Naive thymus-derived CD4-positive, alpha-beta T cell (primary cell): ENCODE measurements at regions of chr15 and their contacts with region 1.

Region 1: GRCh38 chr15:40694688-40695468 is at the start of gene RAD51:
- DNase-seq: peak; percentile 81 to 93 (median 92)
- ATAC-seq: peak; percentile 97
- H3K4me3 ChIP-seq: peak within 1 kb of the TSS; percentile 97
- H3K4me3 Mint-ChIP-seq: peak within 1 kb of the TSS; percentile 93 to 100 (median 95)
- H3K27ac ChIP-seq: peak within 1 kb of the TSS; percentile 91
- H3K27ac Mint-ChIP-seq: peak within 1 kb of the TSS; percentile 95 to 100 (median 99)
- H3K4me1 ChIP-seq: peaks cover 10% of the 10 kb centered on the region in 2 donors
- H3K4me1 Mint-ChIP-seq: peaks cover 14 to 42% (median 22%) of the 10 kb centered on the region in 7 donors
- H3K27me3 ChIP-seq: no peaks in the 10 kb centered on the region
- H3K27me3 Mint-ChIP-seq: no peaks in the 10 kb centered on the region
- total RNA-seq, gene RAD51: 0.51 to 51.5 (median 1.4) TPM

Region 2: DNA sequence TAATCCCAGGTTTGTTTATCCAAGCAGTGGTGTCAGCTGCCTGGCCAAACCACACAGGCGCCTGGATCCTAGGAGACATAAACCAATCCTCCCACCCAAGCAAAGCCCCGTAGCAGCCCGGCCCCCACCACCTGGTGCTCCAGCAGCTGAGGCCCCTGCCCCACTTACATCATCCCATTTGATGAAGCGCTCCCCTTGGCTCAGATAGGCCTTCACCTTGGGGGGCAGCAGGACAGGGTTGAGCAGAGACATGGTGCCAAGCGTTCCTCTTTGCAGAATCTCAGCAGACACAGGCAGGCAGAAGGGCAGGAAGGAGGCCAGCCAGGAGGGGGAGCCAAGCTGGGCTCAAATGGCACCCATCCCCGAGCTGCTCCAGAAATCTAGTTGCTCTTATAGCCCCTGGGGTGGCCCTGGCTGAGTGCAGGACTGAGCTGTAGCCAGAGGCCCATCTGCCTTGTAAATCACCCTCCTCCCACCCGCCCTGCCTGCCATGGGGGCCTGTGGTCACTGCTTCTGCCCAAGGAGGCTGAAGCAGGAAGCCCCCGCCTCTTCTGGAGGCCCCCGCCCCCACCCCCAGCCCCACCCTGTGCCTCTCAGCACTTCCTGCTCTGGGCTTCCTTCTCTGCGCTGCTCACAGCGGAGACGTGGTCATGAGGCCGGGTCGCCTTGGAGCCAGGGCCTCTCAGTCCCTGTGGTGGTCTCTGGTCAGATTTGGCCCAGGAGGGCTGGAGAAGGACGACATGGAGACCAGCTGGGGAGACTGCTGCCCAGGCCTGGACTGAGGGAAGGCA is 387.3 kb before region 1 on chr15 and contains the start of gene PLCB2:
- CTCF ChIA-PET with region 1: no interaction called
- POLR2A ChIA-PET with region 1: no interaction called
- intact Hi-C with region 1: no loop called
- DNase-seq: peak; percentile 57 to 83 (median 79)
- ATAC-seq: peak; percentile 83
- H3K4me3 ChIP-seq: peak within 1 kb of the TSS; percentile 99
- H3K4me3 Mint-ChIP-seq: peak within 1 kb of the TSS; percentile 93 to 99 (median 96)
- H3K27ac ChIP-seq: peak within 1 kb of the TSS; percentile 94
- H3K27ac Mint-ChIP-seq: peak within 1 kb of the TSS; percentile 93 to 99 (median 97)
- H3K4me1 ChIP-seq: peaks cover 16 to 22% of the 10 kb centered on the region in 2 donors
- H3K4me1 Mint-ChIP-seq: peaks cover 31 to 62% (median 48%) of the 10 kb centered on the region in 7 donors
- H3K27me3 ChIP-seq: no peaks in the 10 kb centered on the region
- H3K27me3 Mint-ChIP-seq: peaks cover 0 to 13% (median 0%) of the 10 kb centered on the region in 5 donors
- total RNA-seq, gene PLCB2: 179 to 359 (median 186) TPM

Region 3: GRCh38 chr15:40593588-40594428 is 101.1 kb before region 1 on chr15 and contains the start of gene KNL1:
- CTCF ChIA-PET with region 1: no interaction called
- POLR2A ChIA-PET with region 1: interaction called, 3 read pairs
- intact Hi-C with region 1: loop called (anchors 1 kb)
- DNase-seq: peak; percentile 83 to 94 (median 91)
- ATAC-seq: peak; percentile 85
- H3K4me3 ChIP-seq: peak within 1 kb of the TSS; percentile 98
- H3K4me3 Mint-ChIP-seq: peak within 1 kb of the TSS; percentile 91 to 99 (median 96)
- H3K27ac ChIP-seq: peak within 1 kb of the TSS; percentile 83
- H3K27ac Mint-ChIP-seq: peak within 1 kb of the TSS; percentile 91 to 100 (median 98)
- H3K4me1 ChIP-seq: peaks cover 11 to 12% of the 10 kb centered on the region in 2 donors
- H3K4me1 Mint-ChIP-seq: peaks cover 13 to 41% (median 25%) of the 10 kb centered on the region in 7 donors
- H3K27me3 ChIP-seq: no peaks in the 10 kb centered on the region
- H3K27me3 Mint-ChIP-seq: peaks cover 0 to 12% (median 6%) of the 10 kb centered on the region in 5 donors
- total RNA-seq, gene KNL1: 0.16 to 41.5 (median 1.7) TPM

Region 4: GRCh38 chr15:40754883-40755811 is 60.3 kb after region 1 on chr15 and contains the start of gene RMDN3:
- CTCF ChIA-PET with region 1: interaction called, 3 read pairs
- POLR2A ChIA-PET with region 1: interaction called, 8 read pairs
- intact Hi-C with region 1: loop called (anchors 1 kb)
- DNase-seq: peak; percentile 89 to 97 (median 92)
- ATAC-seq: peak; percentile 99
- H3K4me3 ChIP-seq: peak within 1 kb of the TSS; percentile 94
- H3K4me3 Mint-ChIP-seq: peak within 1 kb of the TSS; percentile 90 to 98 (median 94)
- H3K27ac ChIP-seq: peak within 1 kb of the TSS; percentile 95
- H3K27ac Mint-ChIP-seq: peak within 1 kb of the TSS; percentile 89 to 99 (median 95)
- H3K4me1 ChIP-seq: peaks cover 7 to 10% of the 10 kb centered on the region in 2 donors
- H3K4me1 Mint-ChIP-seq: peaks cover 16 to 37% (median 27%) of the 10 kb centered on the region in 7 donors
- H3K27me3 ChIP-seq: no peaks in the 10 kb centered on the region
- H3K27me3 Mint-ChIP-seq: no peaks in the 10 kb centered on the region
- total RNA-seq, gene RMDN3: 19.5 to 44.0 (median 31.9) TPM

Region 5: DNA sequence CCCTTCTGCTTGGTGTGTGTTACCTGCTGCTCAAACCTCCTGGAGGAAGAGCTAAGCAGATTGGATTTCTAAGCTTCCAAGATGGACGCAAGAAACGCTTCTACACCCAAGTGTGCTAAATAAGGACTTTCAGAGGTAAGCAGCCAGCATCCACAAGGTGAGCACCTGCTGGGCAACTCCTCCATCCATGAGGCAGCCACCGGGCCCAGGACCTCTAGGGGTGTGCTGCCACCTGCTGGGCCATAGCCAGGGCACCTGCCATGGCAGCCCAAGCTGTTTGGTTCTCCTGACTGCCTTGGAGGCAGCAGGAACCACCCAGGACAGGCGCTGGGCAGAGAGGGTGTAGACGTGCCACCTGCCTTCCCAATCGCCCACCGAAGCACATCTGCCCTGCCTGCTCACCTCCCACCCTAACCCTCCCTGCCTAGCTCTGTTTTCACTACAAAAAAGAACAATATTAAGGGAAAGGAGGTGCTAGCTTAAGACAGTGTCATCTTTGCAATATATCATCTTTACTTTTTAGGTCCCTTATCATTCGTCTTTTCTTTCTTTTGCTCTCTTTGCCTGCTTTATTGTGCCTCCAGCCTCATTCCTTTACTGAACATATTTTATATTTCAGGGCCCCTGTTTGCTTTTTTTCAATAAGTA is 87.8 kb after region 1 on chr15:
- CTCF ChIA-PET with region 1: no interaction called
- POLR2A ChIA-PET with region 1: interaction called, 11 read pairs
- intact Hi-C with region 1: no loop called
- DNase-seq: peak; percentile 63 to 78 (median 75)
- ATAC-seq: peak; percentile 99
- H3K4me3 ChIP-seq: no peak overlapping the region
- H3K4me3 Mint-ChIP-seq: no peak overlapping the region
- H3K27ac ChIP-seq: no peak overlapping the region
- H3K27ac Mint-ChIP-seq: peak overlapping the region in 2 of 9 donors; percentile 34 to 39
- H3K4me1 ChIP-seq: peaks cover 8 to 13% of the 10 kb centered on the region in 2 donors
- H3K4me1 Mint-ChIP-seq: peaks cover 12 to 25% (median 20%) of the 10 kb centered on the region in 7 donors
- H3K27me3 ChIP-seq: no peaks in the 10 kb centered on the region
- H3K27me3 Mint-ChIP-seq: no peaks in the 10 kb centered on the region

Region 6: DNA sequence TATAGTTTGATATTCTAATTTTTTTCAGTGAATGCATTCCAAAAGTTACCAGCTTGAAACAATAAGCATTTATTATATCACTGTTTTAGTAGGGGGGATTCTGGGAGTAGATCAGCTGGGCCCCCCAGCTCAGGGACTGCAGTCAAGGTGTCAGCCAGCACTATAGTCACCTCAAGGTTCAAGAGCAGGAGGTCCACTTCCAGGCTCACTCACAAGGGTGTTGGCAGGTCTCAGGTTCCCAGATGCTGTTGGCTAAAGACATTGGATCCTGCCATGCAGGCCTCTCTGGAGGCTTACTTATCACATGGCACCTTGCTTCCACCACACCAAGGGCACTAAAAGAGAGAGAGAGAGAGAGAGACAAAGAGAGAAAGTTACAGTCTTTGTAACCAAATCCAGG is 141.1 kb after region 1 on chr15:
- CTCF ChIA-PET with region 1: no interaction called
- POLR2A ChIA-PET with region 1: no interaction called
- intact Hi-C with region 1: no loop called
- DNase-seq: no peak
- ATAC-seq: no peak
- H3K4me3 ChIP-seq: no peak overlapping the region
- H3K4me3 Mint-ChIP-seq: no peak overlapping the region
- H3K27ac ChIP-seq: no peak overlapping the region
- H3K27ac Mint-ChIP-seq: no peak overlapping the region
- H3K4me1 ChIP-seq: no peaks in the 10 kb centered on the region
- H3K4me1 Mint-ChIP-seq: no peaks in the 10 kb centered on the region
- H3K27me3 ChIP-seq: no peaks in the 10 kb centered on the region
- H3K27me3 Mint-ChIP-seq: peaks cover 0 to 8% (median 0%) of the 10 kb centered on the region in 5 donors

Region 7: GRCh38 chr15:41331833-41332787 is 637.2 kb after region 1 on chr15 and contains the start of gene OIP5:
- CTCF ChIA-PET with region 1: no interaction called
- POLR2A ChIA-PET with region 1: no interaction called
- intact Hi-C with region 1: loop called in 1 of 2 experiments (anchors 2 kb)
- DNase-seq: peak; percentile 83 to 99 (median 97)
- ATAC-seq: peak; percentile 98
- H3K4me3 ChIP-seq: peak within 1 kb of the TSS; percentile 95
- H3K4me3 Mint-ChIP-seq: peak within 1 kb of the TSS; percentile 87 to 100 (median 97)
- H3K27ac ChIP-seq: peak within 1 kb of the TSS; percentile 52
- H3K27ac Mint-ChIP-seq: peak within 1 kb of the TSS; percentile 77 to 97 (median 91)
- H3K4me1 ChIP-seq: peaks cover 9 to 13% of the 10 kb centered on the region in 2 donors
- H3K4me1 Mint-ChIP-seq: peaks cover 12 to 32% (median 29%) of the 10 kb centered on the region in 7 donors
- H3K27me3 ChIP-seq: no peaks in the 10 kb centered on the region
- H3K27me3 Mint-ChIP-seq: no peaks in the 10 kb centered on the region
- total RNA-seq, gene OIP5: 0.32 to 15.2 (median 0.54) TPM in 4 of 5 experiments, not detected in the other